ENCODE measurements at regions of chr4 and their contacts with region 1.

Region 1: GRCh38 chr4:77600521-77601451 is 4.8 kb upstream of the CXCL13 start:
- DNase-seq: no peak
- ATAC-seq: no peak
- H3K4me3 ChIP-seq: no peak overlapping the region
- H3K27ac ChIP-seq: no peak overlapping the region
- H3K4me1 ChIP-seq: no peaks in the 10 kb centered on the region
- H3K27me3 ChIP-seq: no peaks in the 10 kb centered on the region
- CTCF ChIP-seq: peak in 4 of 5 experiments; percentile 37 to 73 (median 52)
- POLR2A ChIP-seq: no peak

Region 2: DNA sequence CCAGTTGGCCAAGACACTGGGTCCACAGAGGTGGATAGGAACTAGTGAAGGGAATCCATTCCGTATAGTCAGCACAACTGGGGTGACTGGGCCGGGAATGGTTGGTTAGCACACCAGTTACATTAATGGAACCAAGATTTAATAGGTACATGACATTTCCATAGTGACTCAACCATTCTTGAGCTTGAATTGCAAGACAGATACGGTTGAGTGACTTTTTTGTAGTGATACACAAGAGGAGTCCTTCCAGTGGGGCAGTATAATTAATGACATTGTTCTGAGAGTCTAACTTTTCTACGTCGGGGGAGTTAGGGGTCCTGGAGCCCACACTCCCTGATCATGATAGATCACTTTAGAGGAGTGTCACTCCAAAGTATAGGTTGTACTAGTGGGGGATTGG is 206.8 kb before region 1 on chr4:
- in situ Hi-C with region 1: loop called in 3 of 4 experiments (anchors 10 kb)
- intact Hi-C with region 1: no loop called
- DNase-seq: no peak
- ATAC-seq: no peak
- H3K4me3 ChIP-seq: no peak overlapping the region
- H3K27ac ChIP-seq: no peak overlapping the region
- H3K4me1 ChIP-seq: no peaks in the 10 kb centered on the region
- H3K27me3 ChIP-seq: no peaks in the 10 kb centered on the region
- CTCF ChIP-seq: no peak
- POLR2A ChIP-seq: no peak

Region 3: DNA sequence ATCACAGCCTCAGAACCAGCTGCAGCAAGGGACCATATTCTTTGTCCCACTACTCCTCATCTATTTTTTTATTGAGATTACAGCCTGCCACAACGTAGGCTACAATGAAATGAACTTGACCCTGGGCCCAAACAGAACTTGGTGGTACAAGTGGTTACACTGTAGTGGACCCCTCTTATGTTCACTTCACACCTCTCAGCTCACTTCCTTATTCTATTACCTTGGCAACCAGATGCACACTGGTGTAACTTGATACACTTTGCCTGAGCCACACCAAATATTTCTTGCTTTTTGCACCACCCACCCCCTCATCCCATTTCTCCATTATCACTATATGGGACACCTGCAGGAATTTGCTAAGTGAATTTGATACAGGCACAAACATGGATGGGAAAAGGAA is 110.7 kb after region 1 on chr4:
- in situ Hi-C with region 1: no loop called
- intact Hi-C with region 1: no loop called
- DNase-seq: no peak
- ATAC-seq: no peak
- H3K4me3 ChIP-seq: no peak overlapping the region
- H3K27ac ChIP-seq: no peak overlapping the region
- H3K4me1 ChIP-seq: peaks cover 3 to 7% of the 10 kb centered on the region in 2 donors
- H3K27me3 ChIP-seq: no peaks in the 10 kb centered on the region
- CTCF ChIP-seq: no peak
- POLR2A ChIP-seq: no peak

Measured in gastrocnemius medialis (tissue), 4 donors.